ENCODE measurements at regions of chrX and their contacts with region 1.

Region 1: GRCh38 chrX:69222103-69223090 is 57.1 kb upstream of the PJA1 start:
- DNase-seq: peak; percentile 78
- H3K4me3 Mint-ChIP-seq: no peak overlapping the region
- H3K27ac Mint-ChIP-seq: no peak overlapping the region
- H3K4me1 Mint-ChIP-seq: peaks cover 2% of the 10 kb centered on the region
- H3K27me3 Mint-ChIP-seq: no peaks in the 10 kb centered on the region

Region 2: DNA sequence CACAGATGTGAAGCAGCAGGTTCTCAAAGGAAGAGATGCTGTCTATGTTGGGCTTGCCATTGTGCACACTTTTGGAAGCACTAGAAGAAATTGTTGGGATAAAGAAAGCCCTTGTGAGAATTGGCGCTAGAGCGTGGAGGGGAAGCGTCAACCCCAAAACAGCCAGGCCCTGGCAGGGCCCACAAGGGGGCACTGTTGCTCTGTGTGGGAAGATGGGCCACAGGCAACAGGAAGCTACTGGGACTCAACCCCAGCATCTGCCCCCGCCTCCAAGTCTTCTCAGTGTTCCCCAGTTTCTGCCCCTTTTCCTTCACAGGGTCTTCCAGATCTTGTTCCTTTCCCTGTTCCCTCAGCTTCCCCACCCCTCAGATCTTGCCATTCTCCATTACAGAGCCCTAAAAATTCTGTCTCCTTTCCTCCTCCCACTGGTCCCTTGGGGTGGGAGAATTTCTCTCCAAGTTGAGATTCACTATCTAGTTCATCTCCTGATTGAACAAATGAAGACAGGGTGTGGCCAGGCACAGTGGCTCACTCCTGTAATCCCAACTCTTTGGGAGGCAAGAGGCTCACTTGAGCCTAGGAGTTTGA is 489.4 kb before region 1 on chrX:
- CTCF ChIA-PET with region 1: interaction called, 10 read pairs
- POLR2A ChIA-PET with region 1: no interaction called
- intact Hi-C with region 1: loop called (anchors 5 kb)
- DNase-seq: peak; percentile 77
- H3K4me3 Mint-ChIP-seq: no peak overlapping the region
- H3K27ac Mint-ChIP-seq: no peak overlapping the region
- H3K4me1 Mint-ChIP-seq: peaks cover 2% of the 10 kb centered on the region
- H3K27me3 Mint-ChIP-seq: peaks cover 4% of the 10 kb centered on the region

Region 3: GRCh38 chrX:68822641-68823410 is 399.6 kb before region 1 on chrX:
- CTCF ChIA-PET with region 1: interaction called, 58 read pairs
- POLR2A ChIA-PET with region 1: no interaction called
- intact Hi-C with region 1: loop called (anchors 1 kb)
- DNase-seq: peak; percentile 37
- H3K4me3 Mint-ChIP-seq: no peak overlapping the region
- H3K27ac Mint-ChIP-seq: no peak overlapping the region
- H3K4me1 Mint-ChIP-seq: peaks cover 2% of the 10 kb centered on the region
- H3K27me3 Mint-ChIP-seq: no peaks in the 10 kb centered on the region

Region 4: DNA sequence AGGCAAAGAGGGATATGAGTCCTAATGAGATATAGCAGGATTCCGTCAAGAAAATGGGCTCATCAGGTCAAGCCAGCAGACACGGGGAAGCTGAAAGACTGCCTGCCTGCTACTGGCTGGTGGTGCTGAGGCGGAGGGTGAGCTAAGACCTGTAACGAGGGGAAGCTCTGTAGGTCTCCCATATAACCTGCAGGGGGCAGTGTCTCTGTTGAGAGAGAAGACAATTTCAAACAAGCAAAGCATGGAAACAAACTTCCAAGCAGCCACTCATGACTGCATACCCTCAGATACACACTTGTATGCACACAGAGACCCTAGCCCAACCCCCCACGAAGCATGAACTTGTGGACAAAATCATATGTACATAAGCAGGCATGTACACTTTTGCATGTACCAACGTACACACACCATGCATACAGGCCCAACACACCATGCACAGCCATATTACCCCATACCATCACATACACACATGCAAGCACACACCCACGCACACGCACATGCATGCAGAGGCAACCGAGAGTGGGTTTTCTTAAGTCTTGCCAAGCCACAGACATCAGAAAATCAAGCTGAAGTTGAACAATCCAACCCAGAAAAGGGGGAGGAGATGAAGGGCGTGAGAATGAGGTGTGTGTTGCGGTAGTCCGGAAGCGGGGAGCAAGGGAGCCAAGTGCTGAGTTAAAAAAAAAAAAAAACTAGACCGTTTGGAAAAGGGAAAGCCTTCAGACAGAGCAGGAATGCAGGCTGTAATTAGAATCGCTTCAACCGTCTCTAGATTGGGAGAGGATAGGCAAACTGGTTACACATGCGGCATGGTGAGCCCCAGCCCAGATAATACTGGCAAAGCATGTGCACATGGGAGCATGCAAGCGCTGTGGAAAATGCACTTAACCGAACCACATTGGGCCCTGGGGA is 128.2 kb before region 1 on chrX:
- CTCF ChIA-PET with region 1: interaction called, 7 read pairs
- POLR2A ChIA-PET with region 1: no interaction called
- intact Hi-C with region 1: loop called (anchors 1 kb)
- DNase-seq: peak; percentile 33
- H3K4me3 Mint-ChIP-seq: no peak overlapping the region
- H3K27ac Mint-ChIP-seq: no peak overlapping the region
- H3K4me1 Mint-ChIP-seq: no peaks in the 10 kb centered on the region
- H3K27me3 Mint-ChIP-seq: no peaks in the 10 kb centered on the region

Region 5: DNA sequence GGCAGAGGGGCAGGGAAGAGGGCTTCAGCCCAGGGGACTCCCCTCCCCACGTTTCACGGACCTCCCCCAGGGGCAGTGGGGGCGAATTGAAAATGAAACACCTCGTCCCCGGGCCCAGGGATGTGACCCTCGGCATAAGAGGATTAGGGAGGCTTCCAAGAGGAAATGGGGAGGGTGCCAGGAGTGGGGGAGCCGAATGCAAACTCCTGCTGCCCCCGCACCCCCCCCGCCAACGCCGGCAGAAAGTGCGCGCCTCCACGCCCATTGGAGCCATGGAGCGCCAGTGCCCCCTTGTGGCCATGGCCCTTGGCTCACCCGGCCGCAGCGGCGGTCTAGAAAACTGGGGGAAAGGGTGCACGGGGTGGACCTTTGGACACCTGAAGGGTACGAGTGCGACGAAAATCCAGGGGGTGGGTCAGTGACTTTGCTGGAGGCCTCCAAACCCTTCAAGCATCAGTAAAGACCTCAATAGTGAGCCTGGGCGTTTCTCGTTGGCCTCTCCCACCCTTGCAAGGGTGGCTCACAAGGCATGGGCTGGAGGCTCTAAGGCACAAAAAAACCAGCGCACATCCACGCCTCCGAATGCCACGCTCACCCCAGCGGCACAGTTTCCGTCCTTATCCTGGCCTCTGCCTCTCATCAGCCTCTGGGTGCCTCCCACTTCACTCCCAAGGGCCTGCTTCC is 63.6 kb after region 1 on chrX:
- CTCF ChIA-PET with region 1: interaction called, 8 read pairs
- POLR2A ChIA-PET with region 1: no interaction called
- intact Hi-C with region 1: loop called (anchors 10 kb)
- DNase-seq: peak; percentile 56
- H3K4me3 Mint-ChIP-seq: no peak overlapping the region
- H3K27ac Mint-ChIP-seq: no peak overlapping the region
- H3K4me1 Mint-ChIP-seq: no peaks in the 10 kb centered on the region
- H3K27me3 Mint-ChIP-seq: no peaks in the 10 kb centered on the region

Region 6: DNA sequence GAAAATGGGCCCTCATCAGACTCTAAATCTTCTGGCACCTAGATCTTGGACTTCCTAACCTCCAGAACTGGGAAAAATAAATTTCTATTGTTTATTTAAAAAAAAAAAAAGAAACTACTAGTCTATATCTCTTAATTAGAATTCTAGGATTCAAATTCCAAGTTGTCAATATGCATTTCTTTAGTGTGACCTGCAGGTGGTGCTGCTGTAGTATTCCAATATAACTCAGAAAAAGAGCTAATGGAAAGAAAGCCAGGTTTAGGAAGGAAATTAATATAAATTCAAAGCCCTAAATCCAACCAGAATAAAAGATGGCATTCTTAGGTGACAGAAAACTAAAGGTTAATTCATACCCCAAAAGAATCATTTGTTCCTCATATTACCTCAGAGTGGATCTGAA is 201.8 kb after region 1 on chrX:
- CTCF ChIA-PET with region 1: no interaction called
- POLR2A ChIA-PET with region 1: no interaction called
- intact Hi-C with region 1: no loop called
- DNase-seq: no peak
- H3K4me3 Mint-ChIP-seq: no peak overlapping the region
- H3K27ac Mint-ChIP-seq: no peak overlapping the region
- H3K4me1 Mint-ChIP-seq: no peaks in the 10 kb centered on the region
- H3K27me3 Mint-ChIP-seq: peaks cover 3% of the 10 kb centered on the region

Region 7: DNA sequence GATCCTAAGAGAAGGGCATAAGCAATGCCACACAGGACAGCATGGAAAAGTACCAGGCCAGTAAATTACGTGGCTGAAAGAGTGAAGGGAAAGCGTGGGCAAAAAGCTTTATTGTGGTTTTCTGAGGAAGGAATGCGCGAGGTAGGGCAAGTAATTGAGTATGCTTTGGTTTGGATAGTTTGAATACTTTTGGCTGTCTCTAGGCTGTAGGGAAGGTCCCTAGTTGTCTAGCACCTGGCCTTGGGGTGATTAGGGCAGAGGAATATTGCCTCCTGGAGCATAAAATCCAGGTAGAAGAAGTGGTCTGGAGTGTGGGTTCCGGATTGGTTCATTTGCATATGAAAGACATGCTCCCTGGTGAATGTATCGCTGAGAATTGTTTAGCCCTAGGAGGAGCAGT is 235.4 kb after region 1 on chrX:
- CTCF ChIA-PET with region 1: no interaction called
- POLR2A ChIA-PET with region 1: no interaction called
- intact Hi-C with region 1: no loop called
- DNase-seq: no peak
- H3K4me3 Mint-ChIP-seq: no peak overlapping the region
- H3K27ac Mint-ChIP-seq: no peak overlapping the region
- H3K4me1 Mint-ChIP-seq: no peaks in the 10 kb centered on the region
- H3K27me3 Mint-ChIP-seq: no peaks in the 10 kb centered on the region

Measured in activated CD4-positive, alpha-beta memory T cell treated with anti-CD3 and anti-CD28 coated beads for 36 hours (primary cell).